ENCODE measurements at regions of chr12 and their contacts with region 1.

Region 1: DNA sequence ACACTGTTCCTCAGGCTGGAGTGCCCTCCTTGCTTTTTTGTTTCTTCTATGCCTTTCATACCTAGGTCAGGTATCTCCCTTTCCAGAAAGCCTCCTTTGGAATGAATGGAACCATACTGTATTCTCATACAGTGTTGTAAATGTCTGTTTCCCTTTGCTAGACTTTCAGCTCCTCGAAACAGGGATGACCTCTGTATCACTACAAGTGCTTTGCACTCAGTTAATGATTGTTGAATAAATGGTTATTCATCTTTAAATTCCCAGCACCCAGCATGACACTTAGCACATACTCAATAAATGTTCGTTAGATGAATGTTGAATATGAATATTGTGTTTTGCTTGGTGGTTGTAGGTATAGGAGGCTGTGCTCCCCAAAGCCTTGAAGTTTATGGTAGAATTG is 5.9 kb upstream of the TULP3 start:
- DNase-seq: no peak
- H3K4me3 ChIP-seq: no peak overlapping the region
- H3K27ac ChIP-seq: peak overlapping the region; percentile 20
- H3K4me1 ChIP-seq: no peaks in the 10 kb centered on the region
- H3K27me3 ChIP-seq: no peaks in the 10 kb centered on the region
- CTCF ChIP-seq: no peak

Region 2: DNA sequence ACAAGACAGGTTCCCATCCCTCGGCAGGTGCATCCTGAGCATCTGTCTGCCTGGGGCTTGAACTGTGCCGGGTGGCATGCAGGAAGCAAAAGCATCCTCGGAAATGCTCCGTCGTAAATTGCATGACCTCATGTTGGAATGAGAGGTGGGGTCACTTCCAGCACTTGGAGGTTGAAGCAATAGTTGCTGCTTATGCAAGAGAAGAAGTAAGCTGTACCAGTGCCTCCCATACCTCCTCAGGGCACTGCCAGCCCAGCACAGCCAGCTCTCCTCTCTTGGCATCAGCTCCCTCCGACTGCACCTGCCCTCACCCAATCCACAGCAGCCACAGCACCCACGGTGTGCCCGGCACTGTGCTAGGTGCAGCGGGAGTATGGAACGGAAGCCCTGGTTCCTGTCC is 85.9 kb after region 1 on chr12:
- CTCF ChIA-PET with region 1: interaction called, 10 read pairs
- POLR2A ChIA-PET with region 1: no interaction called
- intact Hi-C with region 1: no loop called
- DNase-seq: no peak
- H3K4me3 ChIP-seq: no peak overlapping the region
- H3K27ac ChIP-seq: no peak overlapping the region
- H3K4me1 ChIP-seq: peaks cover 5% of the 10 kb centered on the region
- H3K27me3 ChIP-seq: no peaks in the 10 kb centered on the region
- CTCF ChIP-seq: no peak

Region 3: GRCh38 chr12:3034067-3034750 is 149.4 kb after region 1 on chr12:
- CTCF ChIA-PET with region 1: interaction called, 3 read pairs
- POLR2A ChIA-PET with region 1: no interaction called
- intact Hi-C with region 1: loop called (anchors 5 kb)
- DNase-seq: peak; percentile 72
- H3K4me3 ChIP-seq: no peak overlapping the region
- H3K27ac ChIP-seq: no peak overlapping the region
- H3K4me1 ChIP-seq: no peaks in the 10 kb centered on the region
- H3K27me3 ChIP-seq: no peaks in the 10 kb centered on the region
- CTCF ChIP-seq: peak; percentile 75